Endothelial cell of umbilical vein (primary cell): ENCODE measurements at regions of chr2 and their contacts with region 1.

Region 1: GRCh38 chr2:218898109-218898878 is 17.6 kb downstream of the WNT10A start:
- DNase-seq: peak; percentile 35
- H3K4me3 ChIP-seq: no peak overlapping the region
- H3K27ac ChIP-seq: no peak overlapping the region
- H3K4me1 ChIP-seq: no peaks in the 10 kb centered on the region
- H3K27me3 ChIP-seq: peaks cover 66 to 77% of the 10 kb centered on the region in 2 experiments
- CTCF ChIP-seq: peak; percentile 93 to 98
- POLR2A ChIP-seq: no peak

Region 2: GRCh38 chr2:218518876-218519275 is 379.4 kb before region 1 on chr2:
- CTCF ChIA-PET with region 1: no interaction called
- POLR2A ChIA-PET with region 1: no interaction called
- dilution Hi-C with region 1: no loop called
- intact Hi-C with region 1: no loop called
- DNase-seq: no peak
- H3K4me3 ChIP-seq: no peak overlapping the region
- H3K27ac ChIP-seq: no peak overlapping the region
- H3K4me1 ChIP-seq: no peaks in the 10 kb centered on the region
- H3K27me3 ChIP-seq: no peaks in the 10 kb centered on the region
- CTCF ChIP-seq: no peak
- POLR2A ChIP-seq: no peak

Region 3: GRCh38 chr2:218885981-218886947 is 12.0 kb before region 1 on chr2:
- CTCF ChIA-PET with region 1: interaction called, 362 read pairs
- POLR2A ChIA-PET with region 1: no interaction called
- dilution Hi-C with region 1: no loop called
- intact Hi-C with region 1: no loop called
- DNase-seq: no peak
- H3K4me3 ChIP-seq: no peak overlapping the region
- H3K27ac ChIP-seq: no peak overlapping the region
- H3K4me1 ChIP-seq: no peaks in the 10 kb centered on the region
- H3K27me3 ChIP-seq: peaks cover 55 to 77% of the 10 kb centered on the region in 2 experiments
- CTCF ChIP-seq: no peak
- POLR2A ChIP-seq: no peak

Region 4: GRCh38 chr2:218908721-218909619 is 10.7 kb after region 1 on chr2:
- CTCF ChIA-PET with region 1: interaction called, 16 read pairs
- POLR2A ChIA-PET with region 1: no interaction called
- dilution Hi-C with region 1: no loop called
- intact Hi-C with region 1: no loop called
- DNase-seq: peak; percentile 56
- H3K4me3 ChIP-seq: peak overlapping the region; percentile 13 to 47 (median 22)
- H3K27ac ChIP-seq: no peak overlapping the region
- H3K4me1 ChIP-seq: peaks cover 11% of the 10 kb centered on the region
- H3K27me3 ChIP-seq: peaks cover 11 to 12% of the 10 kb centered on the region in 2 experiments
- CTCF ChIP-seq: no peak
- POLR2A ChIP-seq: no peak

Region 5: DNA sequence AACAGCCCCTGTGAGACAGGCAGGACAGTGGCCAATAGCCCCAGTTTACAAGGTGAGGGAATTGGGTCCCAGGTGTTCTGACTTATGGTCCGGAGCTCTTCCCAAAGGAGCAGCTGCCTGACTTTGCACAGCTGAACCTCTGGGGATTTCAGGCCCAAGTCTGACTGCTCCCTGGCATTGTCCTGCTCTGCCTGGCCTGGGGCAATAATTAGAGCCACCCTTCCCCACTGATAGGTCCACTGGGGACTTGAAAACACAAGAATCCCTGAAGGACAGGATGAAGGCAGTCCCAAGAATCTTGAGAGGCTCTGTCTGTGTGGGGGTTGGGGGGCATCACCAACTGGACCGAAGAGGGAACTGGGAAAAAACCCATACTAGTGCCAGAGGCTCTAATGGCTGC is 90.4 kb after region 1 on chr2:
- CTCF ChIA-PET with region 1: no interaction called
- POLR2A ChIA-PET with region 1: no interaction called
- dilution Hi-C with region 1: no loop called
- intact Hi-C with region 1: no loop called
- DNase-seq: no peak
- H3K4me3 ChIP-seq: no peak overlapping the region
- H3K27ac ChIP-seq: no peak overlapping the region
- H3K4me1 ChIP-seq: peaks cover 17% of the 10 kb centered on the region
- H3K27me3 ChIP-seq: peaks cover 80 to 95% of the 10 kb centered on the region in 2 experiments
- CTCF ChIP-seq: no peak
- POLR2A ChIP-seq: no peak

Region 6: GRCh38 chr2:219783359-219783975 is 885.2 kb after region 1 on chr2:
- CTCF ChIA-PET with region 1: no interaction called
- POLR2A ChIA-PET with region 1: no interaction called
- dilution Hi-C with region 1: no loop called
- intact Hi-C with region 1: no loop called
- DNase-seq: no peak
- H3K4me3 ChIP-seq: no peak overlapping the region
- H3K27ac ChIP-seq: no peak overlapping the region
- H3K4me1 ChIP-seq: no peaks in the 10 kb centered on the region
- H3K27me3 ChIP-seq: no peaks in the 10 kb centered on the region
- CTCF ChIP-seq: no peak
- POLR2A ChIP-seq: no peak